ENCODE measurements at regions of chr3 and their contacts with region 1.

Region 1: DNA sequence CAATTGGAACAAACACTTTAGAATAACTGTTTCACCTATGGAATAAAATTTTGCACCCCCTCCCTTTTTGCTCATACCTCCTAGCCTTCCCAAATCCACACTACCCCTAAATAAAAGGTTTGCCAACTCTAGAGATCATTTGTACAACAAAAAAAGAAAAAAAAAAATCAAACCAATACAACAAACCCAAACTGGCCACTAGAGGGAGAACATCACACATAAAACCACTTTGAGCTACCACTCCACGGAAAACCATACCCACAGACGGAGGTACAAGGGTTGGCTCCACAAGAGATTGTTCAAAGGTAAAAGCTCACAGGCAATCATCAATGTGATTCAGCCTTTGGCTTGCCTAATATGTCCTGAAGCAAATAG is 47.6 kb downstream of the SETMAR start:
- DNase-seq: peak; percentile 87
- H3K4me3 Mint-ChIP-seq: peak overlapping the region; percentile 56
- H3K27ac Mint-ChIP-seq: peak overlapping the region; percentile 56
- H3K4me1 Mint-ChIP-seq: peaks cover 21% of the 10 kb centered on the region
- H3K27me3 Mint-ChIP-seq: peaks cover 1% of the 10 kb centered on the region

Region 2: DNA sequence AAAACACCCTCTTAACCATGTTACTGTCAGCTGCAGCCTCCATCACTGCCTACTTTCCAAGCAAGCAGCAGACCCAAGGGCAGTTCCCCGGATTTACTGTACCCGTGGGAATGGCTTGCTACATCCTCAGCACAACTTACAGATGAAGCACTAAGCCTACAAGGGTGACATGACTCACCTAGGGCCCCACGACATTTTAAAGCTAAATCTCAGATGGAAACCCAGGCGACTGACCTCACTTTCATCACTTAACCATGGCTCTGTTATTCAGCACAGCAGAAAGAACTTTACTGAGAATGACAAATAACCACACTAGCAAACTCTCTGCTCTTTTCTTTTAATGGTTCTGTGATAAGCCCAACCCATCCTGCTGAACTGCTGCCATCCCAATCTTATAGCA is 50.7 kb after region 1 on chr3:
- intact Hi-C with region 1: loop called (anchors 1 kb)
- DNase-seq: no peak
- H3K4me3 Mint-ChIP-seq: peak overlapping the region; percentile 42
- H3K27ac Mint-ChIP-seq: peak overlapping the region; percentile 83
- H3K4me1 Mint-ChIP-seq: peaks cover 29% of the 10 kb centered on the region
- H3K27me3 Mint-ChIP-seq: no peaks in the 10 kb centered on the region

Region 3: GRCh38 chr3:4421121-4421520 is 70.3 kb after region 1 on chr3:
- intact Hi-C with region 1: loop called (anchors 1 kb)
- DNase-seq: no peak
- H3K4me3 Mint-ChIP-seq: no peak overlapping the region
- H3K27ac Mint-ChIP-seq: peak overlapping the region; percentile 83
- H3K4me1 Mint-ChIP-seq: peaks cover 23% of the 10 kb centered on the region
- H3K27me3 Mint-ChIP-seq: no peaks in the 10 kb centered on the region

Region 4: DNA sequence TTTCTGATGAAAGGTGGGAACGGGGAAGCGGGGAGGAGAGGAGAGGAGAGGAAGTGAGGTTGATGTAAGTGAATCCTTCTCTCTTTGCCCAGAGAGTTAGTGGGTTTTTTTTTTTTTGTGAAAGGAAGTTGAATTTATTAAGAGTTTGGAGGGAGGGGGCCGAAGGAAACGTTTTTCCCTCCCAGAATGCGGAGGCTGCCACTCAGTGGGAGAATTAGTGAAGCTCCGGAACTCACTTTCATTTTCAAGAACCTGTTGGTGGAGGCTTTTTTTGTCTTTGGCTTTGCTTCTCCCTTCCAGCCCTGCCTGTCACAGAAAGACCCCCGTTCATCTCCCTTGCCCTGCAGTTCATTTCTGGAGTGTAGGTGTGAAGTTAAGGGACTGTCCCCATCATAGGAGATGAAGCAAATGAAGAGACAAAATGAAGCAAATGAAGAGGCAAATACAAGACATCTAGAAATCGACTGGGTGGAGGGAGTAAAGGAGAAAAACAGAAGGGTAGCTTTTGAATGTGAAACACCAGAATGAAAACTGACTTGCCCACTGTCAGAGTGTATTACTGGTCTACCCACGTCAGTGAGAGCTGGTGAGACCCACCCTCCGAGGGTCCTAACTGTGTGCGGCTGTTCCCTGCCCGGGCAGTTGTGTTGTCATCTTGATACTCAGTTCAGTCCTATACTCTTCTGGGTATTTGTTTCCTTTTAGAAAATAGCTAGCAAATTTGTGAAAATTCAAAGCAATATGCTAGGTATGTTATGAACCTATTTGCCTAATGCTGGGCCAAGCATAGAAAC is 233.9 kb after region 1 on chr3:
- intact Hi-C with region 1: loop called (anchors 2 kb)
- DNase-seq: peak; percentile 73
- H3K4me3 Mint-ChIP-seq: peak overlapping the region; percentile 82
- H3K27ac Mint-ChIP-seq: peak overlapping the region; percentile 68
- H3K4me1 Mint-ChIP-seq: peaks cover 32% of the 10 kb centered on the region
- H3K27me3 Mint-ChIP-seq: no peaks in the 10 kb centered on the region